ENCODE measurements at regions of chr13 and their contacts with region 1.

Region 1: GRCh38 chr13:71814806-71815360 is 52.1 kb downstream of the DACH1 start:
- DNase-seq: no peak
- ATAC-seq: no peak
- H3K4me3 ChIP-seq: no peak overlapping the region
- H3K4me3 Mint-ChIP-seq: no peak overlapping the region
- H3K27ac ChIP-seq: no peak overlapping the region
- H3K27ac Mint-ChIP-seq: no peak overlapping the region
- H3K4me1 ChIP-seq: no peaks in the 10 kb centered on the region
- H3K4me1 Mint-ChIP-seq: no peaks in the 10 kb centered on the region
- H3K27me3 ChIP-seq: no peaks in the 10 kb centered on the region
- H3K27me3 Mint-ChIP-seq: no peaks in the 10 kb centered on the region
- CTCF ChIP-seq: no peak

Region 2: GRCh38 chr13:71597150-71597549 is 217.7 kb before region 1 on chr13:
- CTCF ChIA-PET with region 1: no interaction called
- POLR2A ChIA-PET with region 1: no interaction called
- intact Hi-C with region 1: no loop called
- DNase-seq: no peak
- ATAC-seq: no peak
- H3K4me3 ChIP-seq: no peak overlapping the region
- H3K4me3 Mint-ChIP-seq: no peak overlapping the region
- H3K27ac ChIP-seq: no peak overlapping the region
- H3K27ac Mint-ChIP-seq: no peak overlapping the region
- H3K4me1 ChIP-seq: no peaks in the 10 kb centered on the region
- H3K4me1 Mint-ChIP-seq: no peaks in the 10 kb centered on the region
- H3K27me3 ChIP-seq: no peaks in the 10 kb centered on the region
- H3K27me3 Mint-ChIP-seq: no peaks in the 10 kb centered on the region
- CTCF ChIP-seq: no peak

Region 3: GRCh38 chr13:71801781-71802180 is 13.1 kb before region 1 on chr13:
- CTCF ChIA-PET with region 1: no interaction called
- POLR2A ChIA-PET with region 1: interaction called, 14 read pairs
- intact Hi-C with region 1: no loop called
- DNase-seq: no peak
- ATAC-seq: no peak
- H3K4me3 ChIP-seq: no peak overlapping the region
- H3K4me3 Mint-ChIP-seq: no peak overlapping the region
- H3K27ac ChIP-seq: no peak overlapping the region
- H3K27ac Mint-ChIP-seq: no peak overlapping the region
- H3K4me1 ChIP-seq: no peaks in the 10 kb centered on the region
- H3K4me1 Mint-ChIP-seq: no peaks in the 10 kb centered on the region
- H3K27me3 ChIP-seq: no peaks in the 10 kb centered on the region
- H3K27me3 Mint-ChIP-seq: no peaks in the 10 kb centered on the region
- CTCF ChIP-seq: no peak

Measured in B cell (primary cell).